Aorta (tissue), 5 donors: ENCODE measurements at regions of chr1 and their contacts with region 1.

Region 1: DNA sequence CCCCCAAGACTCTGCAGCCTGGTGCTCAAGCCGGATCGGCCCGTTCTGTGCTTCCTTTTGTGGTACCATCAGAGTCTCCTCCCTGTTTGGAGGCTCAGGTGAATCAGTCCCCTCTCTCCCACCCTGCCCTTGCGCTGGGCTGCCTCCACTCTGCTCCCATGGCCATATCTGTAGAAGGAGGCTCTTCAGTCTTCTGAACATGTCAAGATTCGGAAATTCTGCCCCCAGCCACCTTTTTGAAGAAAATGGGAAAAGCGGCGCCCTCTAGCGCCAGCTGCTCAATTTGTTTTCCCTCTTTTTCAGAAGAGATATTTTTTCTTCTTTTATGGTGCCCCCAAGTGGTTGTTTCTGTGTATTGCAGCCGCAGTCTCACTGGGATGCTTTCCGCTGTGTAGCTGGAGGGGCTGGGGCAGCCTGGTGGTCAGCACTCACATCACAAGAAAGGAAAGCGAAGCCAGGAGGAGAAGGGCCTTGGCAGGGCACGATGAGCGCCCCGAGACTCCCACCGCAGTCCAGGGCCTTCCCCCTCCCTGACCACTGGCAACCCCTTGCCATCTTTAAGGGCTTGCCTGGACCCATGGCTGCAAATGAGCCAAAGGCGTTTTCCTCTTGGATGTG is 58.4 kb upstream of the CACNA1E start:
- DNase-seq: peak; percentile 69 to 79
- ATAC-seq: no peak
- H3K4me3 ChIP-seq: no peak overlapping the region
- H3K27ac ChIP-seq: no peak overlapping the region
- H3K4me1 ChIP-seq: no peaks in the 10 kb centered on the region
- H3K27me3 ChIP-seq: peaks cover 0 to 2% of the 10 kb centered on the region in 2 donors

Region 2: DNA sequence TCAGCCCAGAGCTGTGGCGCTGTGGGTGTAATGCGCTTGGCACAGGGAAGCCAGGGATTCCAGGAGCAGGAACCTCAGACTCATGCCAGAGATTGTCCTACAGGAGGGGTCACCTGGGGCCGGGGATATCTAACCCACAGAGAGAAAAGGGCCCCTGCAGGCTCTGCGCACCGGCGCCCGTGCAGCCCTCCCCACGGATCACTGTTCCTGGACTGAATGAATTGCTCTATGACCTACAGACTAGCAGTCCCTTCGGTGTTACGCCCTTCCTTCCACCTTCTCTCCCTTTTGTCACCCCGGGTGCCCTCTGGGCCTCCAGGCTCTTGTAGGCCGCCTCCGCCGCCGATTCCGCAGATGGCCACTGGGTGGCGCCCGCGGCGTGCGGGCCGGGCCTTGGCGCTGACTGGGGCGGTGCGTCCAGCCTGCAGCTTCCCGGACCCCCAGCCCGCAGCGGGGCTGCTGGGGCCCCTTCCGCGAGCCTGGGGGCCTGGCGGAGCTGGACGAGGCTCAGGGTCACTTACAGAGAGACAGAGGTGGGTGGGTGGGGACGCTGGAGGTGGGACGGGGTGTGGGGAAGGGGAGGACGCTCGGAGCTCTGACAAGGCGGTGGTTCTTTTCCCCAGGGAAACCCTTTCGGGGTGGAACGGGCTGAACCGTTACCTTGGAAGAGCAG is 235.1 kb before region 1 on chr1:
- intact Hi-C with region 1: loop called (anchors 2 to 10 kb)
- DNase-seq: peak; percentile 55 to 86
- ATAC-seq: peak; percentile 83
- H3K4me3 ChIP-seq: no peak overlapping the region
- H3K27ac ChIP-seq: no peak overlapping the region
- H3K4me1 ChIP-seq: no peaks in the 10 kb centered on the region
- H3K27me3 ChIP-seq: no peaks in the 10 kb centered on the region